HCT116 (cell line): ENCODE measurements at regions of chr7 and their contacts with region 1.

Region 1: DNA sequence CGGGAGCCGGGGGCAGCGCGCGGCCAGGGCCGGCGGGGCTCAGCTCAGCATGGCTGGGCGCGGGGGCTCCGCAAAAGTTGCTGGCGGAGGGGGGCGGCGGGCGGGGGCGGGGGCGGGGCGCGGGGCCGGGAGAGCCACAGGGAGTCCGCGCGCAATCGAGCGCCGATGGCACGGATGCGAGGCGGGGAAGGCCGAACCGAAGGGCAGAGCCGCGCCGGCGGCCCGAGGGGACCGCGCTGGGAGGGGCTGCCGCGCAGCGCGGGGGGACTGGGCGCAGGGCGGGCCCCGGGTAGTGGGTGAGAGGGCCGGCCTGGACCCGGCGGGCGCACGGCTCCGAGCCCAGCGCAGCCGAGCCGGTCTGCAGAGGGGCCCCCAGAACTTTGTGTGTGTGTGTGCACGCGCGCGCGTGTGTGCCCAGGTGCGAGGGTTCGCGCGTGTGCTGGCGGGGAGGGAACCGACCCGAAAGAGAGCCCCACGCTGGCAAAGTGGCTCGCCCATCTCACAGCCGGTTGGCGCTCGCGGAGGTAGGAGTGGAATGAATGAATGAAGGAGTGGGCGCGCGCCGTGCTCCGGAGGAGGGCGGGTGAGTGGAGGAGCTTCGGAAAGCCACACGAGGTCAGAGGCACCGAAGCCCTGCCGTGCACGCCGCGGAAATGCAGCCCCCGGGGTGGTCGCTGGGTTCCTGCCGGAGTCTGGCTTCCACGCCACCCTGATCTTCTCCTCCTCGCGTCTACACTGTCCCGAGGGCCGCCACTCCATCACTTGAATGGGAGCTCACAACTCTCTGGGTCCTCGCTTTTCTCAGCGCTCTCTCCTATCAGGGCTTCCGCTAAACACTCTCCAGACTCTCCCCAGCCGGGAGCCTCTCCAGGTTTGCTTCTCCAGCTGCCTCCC is at the start of gene HIPK2:
- DNase-seq: no peak
- ATAC-seq: peak; percentile 75
- H3K4me3 ChIP-seq: peak within 1 kb of the TSS; percentile 75 to 86
- H3K27ac ChIP-seq: peak within 1 kb of the TSS; percentile 69
- H3K4me1 ChIP-seq: peaks cover 20 to 39% of the 10 kb centered on the region in 2 experiments
- H3K27me3 ChIP-seq: peaks cover 4% of the 10 kb centered on the region; the same call in 1 of the 2 replicates
- CTCF ChIP-seq: no peak
- POLR2A ChIP-seq: no peak
- RAD21 ChIP-seq: no peak
- total RNA-seq, gene HIPK2: 49.5 TPM

Region 2: GRCh38 chr7:139505563-139505962 is 272.6 kb before region 1 on chr7:
- CTCF ChIA-PET with region 1: no interaction called
- POLR2A ChIA-PET with region 1: no interaction called
- RAD21 ChIA-PET with region 1: no interaction called
- intact Hi-C with region 1: loop called (anchors 10 kb)
- DNase-seq: peak; percentile 15
- ATAC-seq: peak; percentile 91
- H3K4me3 ChIP-seq: no peak overlapping the region
- H3K27ac ChIP-seq: no peak overlapping the region
- H3K4me1 ChIP-seq: peaks cover 0 to 3% of the 10 kb centered on the region in 2 experiments; a peak in 2 of 4 replicates
- H3K27me3 ChIP-seq: no peaks in the 10 kb centered on the region
- CTCF ChIP-seq: peak; percentile 48 to 71 (median 66); a peak in 5 of 6 replicates
- POLR2A ChIP-seq: no peak
- RAD21 ChIP-seq: peak; percentile 59

Region 3: DNA sequence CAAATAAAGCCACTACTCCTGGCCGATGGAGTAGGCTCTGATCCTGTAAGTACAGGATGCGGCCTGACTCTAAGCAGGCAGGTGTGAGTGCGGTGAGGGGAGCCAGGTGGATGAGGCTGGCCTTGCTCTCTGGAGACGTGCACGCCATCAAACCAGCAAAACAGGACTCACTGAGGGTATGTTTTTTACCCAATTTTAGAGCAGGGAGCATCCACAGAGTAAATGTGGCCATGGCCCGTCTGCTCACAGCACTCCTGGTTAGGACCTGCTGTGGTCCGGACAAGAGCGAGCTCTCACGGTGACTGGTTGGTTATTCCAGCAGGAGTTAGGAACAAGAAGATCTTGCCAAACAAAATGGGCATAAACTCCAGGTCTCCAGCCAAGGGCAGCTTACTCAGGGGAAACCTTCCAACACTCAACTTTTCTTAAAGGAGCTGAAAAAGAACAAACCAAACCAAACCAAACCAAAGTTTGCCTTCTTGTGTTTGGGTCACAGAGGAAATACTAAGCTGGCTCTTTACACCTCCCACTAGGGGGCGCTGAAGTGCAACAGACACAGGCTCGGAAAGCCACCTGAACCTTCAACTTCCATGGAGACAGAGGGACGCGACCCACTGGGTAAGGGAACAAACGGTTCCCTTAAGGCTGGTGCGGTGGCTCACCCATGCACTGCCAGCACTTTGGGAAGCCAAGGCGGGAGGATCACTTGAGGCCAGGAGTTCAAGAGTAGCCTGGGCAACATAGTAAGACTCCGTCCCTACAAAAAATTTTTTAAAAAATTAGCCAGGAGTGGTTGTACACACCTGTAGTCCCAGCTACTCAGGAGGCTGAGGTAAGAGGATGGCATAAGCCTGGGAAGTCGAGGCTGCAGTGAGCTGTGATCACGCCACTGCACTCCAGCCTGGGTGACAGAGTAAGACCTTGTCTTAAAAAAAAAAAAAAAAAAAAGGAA is 132.3 kb before region 1 on chr7:
- CTCF ChIA-PET with region 1: no interaction called
- POLR2A ChIA-PET with region 1: no interaction called
- RAD21 ChIA-PET with region 1: no interaction called
- intact Hi-C with region 1: loop called (anchors 1 kb)
- DNase-seq: peak; percentile 63
- ATAC-seq: peak; percentile 96
- H3K4me3 ChIP-seq: no peak overlapping the region
- H3K27ac ChIP-seq: no peak overlapping the region
- H3K4me1 ChIP-seq: peaks cover 0 to 19% of the 10 kb centered on the region in 2 experiments; a peak in 1 of 4 replicates
- H3K27me3 ChIP-seq: no peaks in the 10 kb centered on the region
- CTCF ChIP-seq: peak; percentile 90 to 91 (median 91)
- POLR2A ChIP-seq: no peak
- RAD21 ChIP-seq: peak; percentile 98

Region 4: DNA sequence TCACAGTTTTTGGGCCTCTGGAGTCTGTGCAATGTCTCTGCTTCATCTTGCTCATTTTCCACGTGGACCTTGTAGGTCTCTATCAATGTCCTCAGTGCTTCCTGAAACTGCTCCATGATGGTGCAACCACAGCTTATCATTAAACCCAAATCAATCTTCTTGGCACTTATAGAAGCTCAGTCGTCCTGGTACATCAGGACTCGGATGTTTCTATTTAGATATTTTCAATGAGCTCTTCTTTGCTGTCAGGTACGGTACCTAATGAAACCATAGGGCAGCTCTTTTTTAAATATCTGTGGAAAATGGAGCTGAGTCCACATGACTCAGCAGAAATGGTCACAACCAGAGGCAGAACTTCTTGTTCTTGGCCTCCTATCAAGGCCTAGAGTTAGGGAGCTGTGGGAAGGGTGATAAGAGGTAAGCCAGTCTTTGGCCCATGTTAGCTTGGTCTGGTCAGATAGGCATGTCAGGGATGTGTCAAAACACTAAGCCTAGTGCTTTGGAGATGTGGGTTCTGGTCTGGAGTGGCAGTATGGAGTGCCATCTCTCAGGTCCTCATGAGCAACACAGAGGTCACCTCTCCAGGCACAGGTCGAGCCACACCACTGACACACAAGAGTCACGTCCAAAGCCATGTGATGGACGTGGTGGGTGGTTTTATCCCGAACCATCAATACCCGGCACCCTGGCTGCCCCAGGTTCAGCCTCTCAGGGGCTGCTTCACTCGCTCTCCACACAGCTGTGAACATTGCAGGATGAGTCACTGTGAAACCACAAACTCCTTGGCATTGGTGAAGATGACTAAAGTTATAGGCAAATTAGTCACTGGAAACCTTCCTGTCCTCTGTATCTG is 137.9 kb after region 1 on chr7:
- CTCF ChIA-PET with region 1: no interaction called
- POLR2A ChIA-PET with region 1: no interaction called
- RAD21 ChIA-PET with region 1: no interaction called
- intact Hi-C with region 1: loop called (anchors 5 kb)
- DNase-seq: peak; percentile 92
- ATAC-seq: peak; percentile 92
- H3K4me3 ChIP-seq: peak overlapping the region in 1 of 2 experiments; percentile 31; a peak in 2 of 4 replicates
- H3K27ac ChIP-seq: peak overlapping the region; percentile 24
- H3K4me1 ChIP-seq: peaks cover 19 to 35% of the 10 kb centered on the region in 2 experiments
- H3K27me3 ChIP-seq: no peaks in the 10 kb centered on the region
- CTCF ChIP-seq: no peak
- POLR2A ChIP-seq: no peak
- RAD21 ChIP-seq: no peak; the same call in 1 of the 2 replicates